HepG2 (cell line): ENCODE measurements at regions of chr10 and their contacts with region 1.

Region 1: GRCh38 chr10:97318772-97319651 is at the start of gene FRAT1:
- DNase-seq: peak; percentile 74
- ATAC-seq: peak; percentile 82
- H3K4me3 ChIP-seq: peak within 1 kb of the TSS; percentile 75 to 84 (median 82)
- H3K27ac ChIP-seq: peak within 1 kb of the TSS; percentile 97
- H3K4me1 ChIP-seq: peaks cover 48% of the 10 kb centered on the region
- H3K27me3 ChIP-seq: peaks cover 0 to 2% of the 10 kb centered on the region in 2 experiments; a peak in 2 of 5 replicates
- CTCF ChIP-seq: no peak
- EP300 ChIP-seq: no peak; a peak in 1 of 4 replicates
- POLR2A ChIP-seq: peak; percentile 49 to 62; a peak in 3 of 4 replicates
- RAD21 ChIP-seq: peak; percentile 51
- total RNA-seq, gene FRAT1: 1.3 and 2.3 TPM in 2 replicates

Region 2: DNA sequence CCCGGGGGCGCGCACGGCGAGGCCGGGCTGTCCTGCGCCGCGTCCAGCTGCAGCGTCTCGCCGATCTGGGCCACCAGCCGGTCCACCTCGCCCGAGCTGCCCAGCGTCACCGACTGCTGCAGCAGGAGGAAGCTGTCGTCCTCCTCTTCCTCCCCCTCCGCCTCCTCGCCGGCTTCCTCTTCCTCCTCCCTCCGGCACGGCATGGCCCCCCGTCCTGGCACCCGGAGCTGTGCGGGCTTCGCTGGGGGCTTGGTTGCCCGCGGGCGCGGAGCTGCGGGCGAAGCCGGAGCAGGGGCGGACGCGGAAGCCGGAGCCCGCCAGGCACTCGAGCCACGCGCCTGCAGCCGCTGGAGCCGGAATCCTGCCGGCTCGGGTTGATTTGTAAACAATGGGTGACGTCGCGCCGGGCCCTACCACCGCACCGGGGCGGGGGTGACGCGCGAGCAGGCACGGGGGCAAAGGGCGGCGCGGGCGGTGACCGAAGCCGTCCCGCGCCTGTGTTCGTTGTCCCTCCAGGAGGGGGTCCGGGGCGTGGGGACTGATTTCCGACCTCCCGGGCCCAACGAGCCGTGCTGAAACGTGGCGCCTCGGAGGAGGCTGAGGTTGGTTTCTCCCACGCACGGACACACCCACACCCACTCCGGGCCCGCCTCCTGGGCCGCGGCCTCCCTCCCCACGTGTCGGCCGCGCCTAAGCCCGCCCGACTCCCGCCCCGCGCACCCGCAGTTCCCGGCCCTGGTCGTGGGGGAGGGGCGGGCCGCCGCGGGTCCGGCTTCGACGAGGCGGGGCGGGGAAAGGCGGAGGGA is 15.6 kb after region 1 on chr10 and contains the start of gene FRAT2:
- CTCF ChIA-PET with region 1: interaction called, 6 read pairs
- POLR2A ChIA-PET with region 1: interaction called, 98 read pairs
- in situ Hi-C with region 1: no loop called
- intact Hi-C with region 1: no loop called
- DNase-seq: peak; percentile 74
- ATAC-seq: peak; percentile 76
- H3K4me3 ChIP-seq: peak within 1 kb of the TSS; percentile 65 to 87 (median 82)
- H3K27ac ChIP-seq: peak within 1 kb of the TSS; percentile 85
- H3K4me1 ChIP-seq: peaks cover 52% of the 10 kb centered on the region
- H3K27me3 ChIP-seq: no peaks in the 10 kb centered on the region
- CTCF ChIP-seq: no peak
- EP300 ChIP-seq: peak; percentile 39 to 53; a peak in 1 of 4 replicates
- POLR2A ChIP-seq: peak; percentile 80 to 86
- RAD21 ChIP-seq: peak; percentile 66
- total RNA-seq, gene FRAT2: 10.1 and 14.1 TPM in 2 replicates